AG04449 (cell line): ENCODE measurements at regions of chr16 and their contacts with region 1.

Region 1: DNA sequence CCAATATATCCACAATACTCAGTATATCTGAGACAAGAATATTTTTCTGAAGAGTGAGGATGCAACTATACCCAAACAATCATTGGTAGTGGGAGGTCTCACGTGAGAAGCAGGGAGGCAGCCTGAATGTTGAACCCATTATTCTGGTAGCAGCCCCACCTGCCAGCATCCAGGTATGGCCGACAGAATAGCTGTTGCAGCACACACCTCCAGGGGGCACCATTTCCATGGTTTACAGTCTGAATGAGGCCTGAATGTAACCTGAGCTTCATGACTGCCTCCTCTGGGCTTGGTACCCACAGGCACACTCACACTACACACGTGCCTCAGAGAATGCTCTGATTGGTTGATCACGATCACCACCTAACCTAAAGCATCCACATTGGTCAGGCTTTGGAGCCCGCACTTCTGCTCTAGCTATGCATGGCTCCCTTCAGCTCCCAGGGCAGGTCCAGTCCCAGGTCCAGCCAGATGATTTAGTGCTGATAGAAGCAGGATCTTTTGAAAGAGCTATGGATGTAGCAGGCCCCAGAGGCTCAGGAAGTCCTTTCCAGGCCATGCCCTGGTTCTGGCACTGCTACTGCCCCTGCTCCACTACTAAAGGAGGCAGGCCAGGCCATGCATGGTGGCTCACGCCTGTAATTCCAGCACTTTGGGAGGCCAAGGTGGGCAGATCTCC is 11.0 kb upstream of the CBFB start:
- DNase-seq: peak; percentile 72
- H3K4me3 ChIP-seq: no peak overlapping the region
- CTCF ChIP-seq: peak; percentile 81

Region 2: DNA sequence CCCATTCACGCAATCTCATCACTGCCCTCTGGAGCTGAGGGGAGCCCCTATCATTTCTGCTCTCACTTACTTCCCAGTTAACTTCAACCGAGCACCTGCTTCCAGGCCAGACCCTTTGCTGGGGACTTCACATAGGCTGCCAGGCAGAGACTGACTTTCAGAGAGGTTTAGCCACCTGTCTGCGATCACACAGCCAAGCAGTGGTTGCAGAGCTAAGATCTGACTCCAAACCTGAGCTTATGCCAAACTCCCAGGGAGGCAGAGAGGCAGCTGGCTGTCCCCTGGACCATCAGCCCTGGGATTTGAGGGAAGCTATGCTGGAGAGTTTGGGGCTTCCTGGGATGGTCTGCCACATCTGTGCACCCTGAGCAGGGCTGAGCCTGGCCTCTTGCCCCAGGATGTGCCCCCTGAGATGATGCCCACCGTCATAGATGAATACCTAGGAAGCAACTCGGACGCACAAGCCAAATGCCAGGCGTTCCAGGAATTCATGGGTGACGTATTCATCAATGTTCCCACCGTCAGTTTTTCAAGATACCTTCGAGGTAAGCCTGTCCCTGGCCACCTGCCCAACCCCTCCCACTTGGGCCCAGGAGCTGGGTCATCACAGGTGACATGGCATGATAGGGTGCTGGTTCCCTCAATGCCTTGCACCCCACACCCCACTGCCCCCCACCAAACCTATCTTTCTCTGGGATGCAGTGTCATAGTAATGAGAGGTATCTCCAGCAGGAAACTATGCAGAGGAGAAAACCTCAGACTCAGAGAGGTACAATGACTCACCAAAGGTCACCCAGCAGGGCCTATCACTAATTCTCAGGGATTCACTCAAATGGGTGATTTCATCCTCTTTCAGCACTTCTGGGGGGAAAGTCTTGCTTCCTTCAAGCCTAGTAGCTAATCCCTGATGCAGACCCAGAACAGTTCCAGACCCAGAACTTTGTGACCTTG is 46.9 kb before region 1 on chr16:
- CTCF ChIA-PET with region 1: interaction called, 11 read pairs
- POLR2A ChIA-PET with region 1: no interaction called
- DNase-seq: no peak
- H3K4me3 ChIP-seq: no peak overlapping the region
- CTCF ChIP-seq: no peak

Region 3: DNA sequence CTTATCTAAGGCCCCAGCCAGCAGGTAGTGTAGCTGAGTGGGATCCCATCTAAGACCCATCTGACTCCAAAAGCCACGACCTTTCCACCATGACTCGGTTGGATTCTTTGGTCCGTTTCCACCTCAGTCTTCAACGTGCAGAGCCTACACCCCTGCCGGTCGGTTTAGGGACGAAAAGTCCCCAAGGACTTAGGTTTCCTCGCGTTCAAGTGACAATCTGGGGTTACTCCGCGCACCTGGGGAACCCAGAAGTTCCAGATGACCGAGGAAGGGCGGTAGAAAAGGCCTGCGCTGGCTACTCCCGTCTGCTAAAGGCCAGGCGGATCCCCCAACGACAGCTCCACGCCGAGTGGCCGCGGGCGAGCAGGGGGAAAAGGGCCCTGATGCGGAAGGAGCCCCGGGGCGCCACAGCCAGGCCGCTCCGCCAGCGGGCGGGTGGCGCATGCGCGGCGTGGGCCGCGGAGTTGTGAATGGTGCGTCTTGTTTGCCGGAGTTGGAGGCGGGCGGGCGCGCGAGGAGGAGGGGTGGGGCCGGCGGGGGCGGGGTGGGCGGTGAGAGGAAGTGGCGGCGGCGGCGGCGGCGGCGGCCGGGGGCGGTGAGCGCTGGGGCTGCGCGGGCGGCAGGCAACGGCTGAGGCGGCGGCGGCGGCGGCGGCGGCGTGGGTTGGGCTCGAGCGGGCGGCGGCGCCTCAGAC is 10.8 kb after region 1 on chr16 and contains the start of gene CBFB:
- CTCF ChIA-PET with region 1: interaction called, 41 read pairs
- POLR2A ChIA-PET with region 1: interaction called, 3 read pairs
- DNase-seq: peak; percentile 19
- H3K4me3 ChIP-seq: peak within 1 kb of the TSS; percentile 78
- CTCF ChIP-seq: no peak

Region 4: GRCh38 chr16:67115639-67116038 is 97.7 kb after region 1 on chr16:
- CTCF ChIA-PET with region 1: interaction called, 10 read pairs
- POLR2A ChIA-PET with region 1: no interaction called
- DNase-seq: peak; percentile 74
- H3K4me3 ChIP-seq: no peak overlapping the region
- CTCF ChIP-seq: no peak

Region 5: GRCh38 chr16:67144943-67145342 is 127.0 kb after region 1 on chr16:
- CTCF ChIA-PET with region 1: interaction called, 224 read pairs
- POLR2A ChIA-PET with region 1: no interaction called
- DNase-seq: no peak
- H3K4me3 ChIP-seq: no peak overlapping the region
- CTCF ChIP-seq: no peak